Right ventricle myocardium superior (tissue), 1 donor: ENCODE measurements at regions of chr18 and their contacts with region 1.

Region 1: DNA sequence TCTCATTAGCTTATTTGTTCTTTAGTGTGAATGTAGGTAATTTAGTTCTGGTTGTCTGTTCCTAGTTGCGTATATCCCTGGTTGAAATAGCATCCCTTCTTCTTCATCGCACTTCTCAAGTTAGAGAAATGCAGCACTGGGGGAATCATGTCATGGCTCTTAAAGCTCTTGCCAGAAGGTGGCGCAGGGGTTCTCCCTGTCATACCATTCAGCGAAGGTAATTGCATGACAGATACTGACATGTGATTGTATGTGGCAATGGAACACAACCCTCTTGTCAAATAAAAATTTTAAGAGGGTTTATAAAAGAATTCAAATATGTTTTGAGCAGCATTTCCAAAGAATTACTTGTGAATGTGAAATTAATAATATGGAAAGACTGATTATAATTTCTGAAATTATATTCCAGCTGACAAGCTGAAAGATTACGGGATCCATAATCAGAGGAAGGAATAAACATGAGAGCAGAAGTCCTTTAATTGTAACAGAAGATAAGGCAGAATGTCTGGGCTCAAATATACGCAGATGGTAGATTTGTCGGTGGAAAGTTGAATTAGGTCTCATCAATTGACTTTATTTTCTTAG is 411.7 kb downstream of the DSEL start:
- DNase-seq: peak; percentile 54
- ATAC-seq: peak; percentile 74

Region 2: DNA sequence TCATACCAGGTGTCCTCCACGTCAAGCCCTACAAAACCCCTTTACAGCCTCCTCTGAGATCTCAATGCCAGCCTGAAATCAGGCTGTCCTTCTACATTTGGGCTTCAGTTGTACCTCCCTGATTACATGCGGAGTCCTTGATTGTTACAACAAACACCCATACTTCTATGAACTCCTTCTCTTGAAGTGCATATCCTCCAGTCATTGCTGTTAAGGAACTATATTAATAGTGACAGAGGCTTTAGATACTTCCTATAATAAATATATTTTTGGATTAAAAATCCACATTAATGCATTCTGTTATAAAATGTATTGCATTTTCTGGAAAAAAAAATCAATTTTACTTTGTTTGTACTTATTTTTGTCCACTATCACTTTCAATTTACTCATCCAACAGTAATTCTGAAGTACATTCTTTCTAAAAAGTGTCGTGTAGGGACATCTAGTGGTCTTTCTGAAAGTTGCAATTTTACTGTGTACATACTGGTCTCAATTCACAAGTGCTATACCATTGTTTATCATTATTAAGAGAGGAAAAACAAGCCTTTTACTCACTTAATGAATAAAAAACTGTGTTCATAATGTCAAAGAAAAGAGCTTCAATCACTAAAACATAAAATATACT is 95.3 kb after region 1 on chr18:
- intact Hi-C with region 1: loop called (anchors 10 kb)
- DNase-seq: no peak
- ATAC-seq: peak; percentile 55

Region 3: GRCh38 chr18:67516539-67517443 is 412.0 kb after region 1 on chr18 and contains the start of gene DSEL:
- intact Hi-C with region 1: no loop called
- DNase-seq: peak; percentile 98
- ATAC-seq: peak; percentile 99
- total RNA-seq, gene DSEL: 1.7 TPM